Sigmoid colon (tissue), 7 donors: ENCODE measurements at regions of chrX and their contacts with region 1.

Region 1: GRCh38 chrX:47523297-47523696 is 37.7 kb upstream of the ARAF start:
- DNase-seq: peak; percentile 90
- H3K4me3 ChIP-seq: peak overlapping the region; percentile 29 to 60 (median 52)
- H3K27ac ChIP-seq: peak overlapping the region in 2 of 4 donors; percentile 19 to 42
- H3K4me1 ChIP-seq: peaks cover 0 to 6% (median 0%) of the 10 kb centered on the region in 4 donors
- H3K27me3 ChIP-seq: no peaks in the 10 kb centered on the region
- CTCF ChIP-seq: peak; percentile 42 to 67 (median 63)
- EP300 ChIP-seq: no peak
- POLR2A ChIP-seq: no peak

Region 2: GRCh38 chrX:47384502-47384901 is 138.8 kb before region 1 on chrX:
- intact Hi-C with region 1: loop called (anchors 5 kb)
- DNase-seq: peak; percentile 80
- H3K4me3 ChIP-seq: no peak overlapping the region
- H3K27ac ChIP-seq: no peak overlapping the region
- H3K4me1 ChIP-seq: no peaks in the 10 kb centered on the region
- H3K27me3 ChIP-seq: no peaks in the 10 kb centered on the region
- CTCF ChIP-seq: peak; percentile 6 to 64 (median 46)
- EP300 ChIP-seq: no peak
- POLR2A ChIP-seq: no peak

Region 3: DNA sequence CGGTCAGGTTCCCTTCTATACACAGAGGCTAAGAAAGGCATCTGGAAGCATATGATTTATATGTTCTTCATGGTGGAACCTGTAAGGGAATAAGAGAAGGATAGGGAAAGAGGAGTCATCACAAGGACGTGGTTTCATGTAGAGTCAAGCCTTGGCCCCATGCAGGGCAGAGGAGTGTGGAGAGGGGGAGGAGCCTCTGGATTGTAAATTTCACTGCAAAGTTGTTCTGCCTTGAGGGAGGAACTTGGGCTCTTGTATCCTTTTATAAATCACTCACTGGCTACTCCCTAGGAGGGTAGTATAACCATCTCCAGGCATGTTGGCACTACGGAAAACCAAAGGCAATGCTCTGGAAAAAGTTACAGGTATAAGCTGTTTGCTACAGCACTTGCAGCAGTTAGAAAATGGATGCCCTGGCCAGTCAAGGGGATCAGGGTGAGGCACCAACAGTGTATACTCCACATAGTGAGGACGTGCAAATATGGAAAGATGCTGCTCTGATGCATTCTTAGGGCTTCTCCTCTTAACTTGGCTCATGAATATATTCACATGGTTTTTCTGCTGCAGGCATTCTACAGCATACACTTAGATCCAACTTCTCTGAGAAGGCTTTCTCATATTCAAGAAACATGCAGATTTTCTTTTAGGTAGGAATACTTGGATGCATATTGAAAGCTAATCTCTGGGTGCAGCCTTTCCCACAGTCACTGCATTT is 253.2 kb after region 1 on chrX:
- intact Hi-C with region 1: no loop called
- DNase-seq: no peak
- H3K4me3 ChIP-seq: no peak overlapping the region
- H3K27ac ChIP-seq: no peak overlapping the region
- H3K4me1 ChIP-seq: no peaks in the 10 kb centered on the region
- H3K27me3 ChIP-seq: no peaks in the 10 kb centered on the region
- CTCF ChIP-seq: no peak
- EP300 ChIP-seq: no peak
- POLR2A ChIP-seq: no peak